Right ventricle myocardium inferior (tissue), 1 donor: ENCODE measurements at regions of chr6 and their contacts with region 1.

Region 1: GRCh38 chr6:291697-292505 is at the start of gene DUSP22:
- DNase-seq: peak; percentile 95
- ATAC-seq: peak; percentile 92
- total RNA-seq, gene DUSP22: 50.0 TPM

Region 2: DNA sequence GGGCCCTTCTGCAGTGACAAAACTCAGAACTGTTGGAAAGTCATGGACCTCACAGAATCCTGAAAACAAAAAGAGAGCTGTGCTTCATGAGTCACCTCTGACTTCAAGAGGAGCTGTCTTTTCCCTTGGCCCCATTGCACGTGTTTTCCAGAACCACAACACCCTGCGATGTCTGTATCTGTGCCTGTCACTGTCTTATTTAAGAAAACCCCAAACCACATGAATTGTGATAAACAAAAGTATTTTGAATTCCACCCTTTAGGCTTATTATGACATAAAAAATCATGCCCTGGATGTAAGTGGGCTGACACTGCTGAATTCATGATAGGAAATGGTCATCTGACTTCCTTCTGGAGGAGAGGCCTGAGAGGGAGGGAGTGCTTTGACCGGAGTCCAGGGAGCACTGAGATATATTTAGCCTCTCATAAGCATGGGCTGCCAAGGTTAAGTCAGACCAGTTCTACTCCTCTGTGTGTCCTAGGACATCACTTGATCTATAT is 96.0 kb before region 1 on chr6:
- intact Hi-C with region 1: loop called (anchors 5 kb)
- DNase-seq: no peak
- ATAC-seq: peak; percentile 96

Region 3: GRCh38 chr6:337805-338368 is 46.0 kb after region 1 on chr6:
- intact Hi-C with region 1: loop called (anchors 2 kb)
- DNase-seq: peak; percentile 45
- ATAC-seq: no peak

Region 4: DNA sequence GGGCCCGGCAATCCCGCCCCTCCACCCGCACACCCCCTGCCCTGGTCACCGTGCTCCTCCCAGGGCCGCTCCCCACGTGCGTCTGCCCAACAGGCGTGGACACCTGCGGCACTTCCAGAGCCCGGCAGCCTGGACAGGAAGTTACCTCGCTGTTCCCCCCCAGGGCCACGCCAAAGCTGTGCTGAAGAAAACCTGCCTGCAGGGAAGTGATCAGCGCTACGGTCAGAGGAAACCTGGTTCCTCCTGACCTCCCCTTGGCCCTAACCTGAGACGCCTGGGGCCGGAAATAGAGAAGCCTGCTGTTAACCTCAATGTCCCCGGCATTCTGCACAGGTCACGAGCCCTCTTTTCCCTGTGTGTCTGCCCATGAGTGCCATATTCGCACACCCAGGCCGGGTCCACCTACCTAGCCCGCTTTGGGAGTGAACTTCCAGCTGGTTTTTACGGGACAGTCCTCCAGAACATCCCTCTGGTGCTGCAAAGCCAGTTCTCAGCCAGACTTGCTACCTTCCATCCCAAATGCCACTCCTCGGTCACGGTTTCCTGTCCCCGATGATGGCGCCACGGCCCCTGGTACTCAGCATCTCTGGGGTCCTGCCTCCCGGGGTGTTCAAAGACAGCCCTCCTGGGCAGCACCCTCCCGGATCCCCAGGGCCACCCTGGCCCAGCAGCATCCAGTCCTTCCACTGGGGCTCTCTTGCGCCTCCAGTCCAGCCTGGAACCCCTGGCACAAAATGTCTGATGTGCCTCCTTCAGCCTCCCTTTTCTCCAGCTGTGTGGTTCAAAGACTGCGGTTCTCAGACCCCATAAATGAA is 87.7 kb after region 1 on chr6:
- intact Hi-C with region 1: loop called (anchors 5 kb)
- DNase-seq: peak; percentile 63
- ATAC-seq: peak; percentile 5